Activated CD8-positive, alpha-beta T cell treated with anti-CD3 and anti-CD28 coated beads, Interleukin-2, amount 10 ng/mL, durations not matched to agents 7 days and 5 days (primary cell): ENCODE measurements at regions of chr1 and their contacts with region 1.

Region 1: DNA sequence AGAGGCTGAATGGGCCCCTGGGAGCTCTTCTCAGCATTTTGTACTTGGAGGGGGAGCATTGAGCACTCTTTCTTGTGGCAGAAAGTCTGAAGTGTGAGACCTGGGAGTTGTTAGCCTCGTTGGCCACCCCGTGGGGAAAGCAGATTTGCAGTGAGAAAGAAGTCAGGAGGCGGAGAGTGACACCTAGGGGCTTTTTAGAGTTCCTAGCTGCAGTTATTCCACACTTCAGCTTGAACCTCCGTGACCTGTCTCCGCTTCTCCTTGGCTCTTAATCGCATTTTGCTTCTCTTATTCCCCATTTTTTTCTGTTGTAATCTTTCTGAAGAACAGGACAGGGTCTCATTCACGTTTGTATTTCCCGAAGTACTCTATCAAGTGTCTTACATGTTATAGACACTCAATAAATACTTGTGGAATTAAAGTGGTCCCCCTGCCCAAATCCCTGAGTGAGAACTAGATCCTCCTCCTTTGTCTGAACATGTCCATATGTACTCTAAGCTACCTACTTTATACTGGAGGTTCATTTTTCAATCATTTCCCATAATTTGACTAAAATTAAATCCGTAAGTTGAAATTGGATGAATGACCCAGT is 14.5 kb upstream of the C1orf141 start:
- DNase-seq: peak; percentile 77
- ATAC-seq: peak; percentile 86
- H3K4me3 Mint-ChIP-seq: no peak overlapping the region
- H3K27ac Mint-ChIP-seq: peak overlapping the region; percentile 58
- H3K4me1 Mint-ChIP-seq: peaks cover 42% of the 10 kb centered on the region
- H3K27me3 Mint-ChIP-seq: peaks cover 33% of the 10 kb centered on the region

Region 2: DNA sequence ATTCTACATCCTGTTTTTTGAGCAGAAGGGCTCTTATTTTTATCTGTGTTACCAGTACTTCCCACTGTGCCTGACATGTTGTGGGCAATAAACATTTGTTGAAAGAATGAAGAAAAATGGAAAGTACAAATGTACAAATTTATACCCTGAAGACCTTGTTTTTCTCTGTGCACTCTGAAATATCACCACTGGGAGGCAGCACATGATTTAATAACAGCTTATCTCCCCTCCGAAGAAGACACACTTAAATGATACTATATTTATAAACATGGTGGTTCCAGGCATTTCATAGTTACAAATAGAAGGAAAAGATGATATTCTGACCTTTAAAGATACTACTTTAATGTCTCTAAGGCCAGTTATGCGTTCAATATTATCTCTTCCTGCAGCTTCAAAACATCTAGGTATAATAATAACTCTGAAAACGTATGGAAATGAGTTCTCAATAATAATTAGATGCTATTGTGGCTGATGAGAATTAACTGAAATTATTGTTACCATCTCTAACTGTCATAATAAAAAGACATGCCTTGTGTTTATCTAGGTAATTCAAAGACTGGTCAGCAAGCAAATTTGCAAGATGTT is 384.2 kb before region 1 on chr1:
- CTCF ChIA-PET with region 1: interaction called, 23 read pairs
- POLR2A ChIA-PET with region 1: no interaction called
- DNase-seq: peak; percentile 72
- ATAC-seq: peak; percentile 63
- H3K4me3 Mint-ChIP-seq: no peak overlapping the region
- H3K27ac Mint-ChIP-seq: no peak overlapping the region
- H3K4me1 Mint-ChIP-seq: peaks cover 18% of the 10 kb centered on the region
- H3K27me3 Mint-ChIP-seq: peaks cover 5% of the 10 kb centered on the region

Region 3: GRCh38 chr1:66984491-66984890 is 164.8 kb before region 1 on chr1:
- CTCF ChIA-PET with region 1: interaction called, 16 read pairs
- POLR2A ChIA-PET with region 1: no interaction called
- DNase-seq: no peak
- ATAC-seq: no peak
- H3K4me3 Mint-ChIP-seq: no peak overlapping the region
- H3K27ac Mint-ChIP-seq: peak overlapping the region; percentile 20
- H3K4me1 Mint-ChIP-seq: peaks cover 28% of the 10 kb centered on the region
- H3K27me3 Mint-ChIP-seq: no peaks in the 10 kb centered on the region

Region 4: GRCh38 chr1:67005068-67005467 is 144.2 kb before region 1 on chr1:
- CTCF ChIA-PET with region 1: interaction called, 21 read pairs
- POLR2A ChIA-PET with region 1: interaction called, 3 read pairs
- DNase-seq: no peak
- ATAC-seq: no peak
- H3K4me3 Mint-ChIP-seq: no peak overlapping the region
- H3K27ac Mint-ChIP-seq: no peak overlapping the region
- H3K4me1 Mint-ChIP-seq: peaks cover 5% of the 10 kb centered on the region
- H3K27me3 Mint-ChIP-seq: no peaks in the 10 kb centered on the region

Region 5: DNA sequence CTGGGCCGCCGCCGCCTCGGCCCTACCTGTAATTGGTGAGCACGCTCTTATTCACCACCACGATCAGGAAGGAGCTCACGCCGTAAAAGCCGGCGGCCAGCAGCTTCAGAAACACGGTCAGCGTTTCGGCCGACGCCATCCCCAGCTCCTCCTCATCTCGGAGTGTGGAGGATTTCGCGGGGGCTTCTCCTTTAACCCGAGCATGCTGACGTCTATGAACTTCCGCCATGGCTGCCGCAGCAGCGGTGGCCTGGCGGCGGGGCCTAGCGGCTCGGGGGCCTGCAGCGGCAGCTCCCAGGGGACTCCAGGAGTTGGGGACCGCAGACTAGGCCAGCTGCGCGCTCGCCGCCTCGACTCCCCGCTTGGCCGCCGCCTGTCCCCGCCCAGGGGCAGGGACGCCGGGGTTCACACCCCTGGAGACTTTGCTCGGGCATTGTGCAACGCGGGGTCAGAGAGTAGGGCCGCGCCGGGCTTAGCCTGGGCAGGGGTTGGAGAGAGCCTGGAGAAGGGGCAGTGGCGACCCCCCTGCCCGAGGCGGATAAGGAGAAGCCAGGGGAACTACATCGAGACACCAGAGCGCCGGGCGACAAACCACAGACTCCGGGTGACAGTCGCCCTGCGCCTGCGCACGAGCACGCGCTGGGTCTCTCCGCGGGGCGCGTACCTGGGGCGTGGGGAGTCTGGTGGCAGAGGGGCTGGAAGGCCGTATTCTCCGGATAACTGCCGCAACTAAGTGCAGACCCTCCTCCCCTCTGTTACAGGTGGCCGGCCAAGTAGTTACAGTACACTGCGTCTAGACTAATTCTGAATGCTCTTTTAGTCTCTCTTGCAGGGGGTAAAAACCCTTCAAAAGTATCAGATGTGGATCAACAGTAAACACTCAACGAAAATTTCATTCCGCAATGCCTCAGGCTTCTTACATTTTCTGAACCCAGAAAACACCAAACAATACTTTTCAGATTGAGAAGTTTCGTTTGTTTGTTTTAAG is 95.2 kb before region 1 on chr1 and contains the start of gene SLC35D1:
- CTCF ChIA-PET with region 1: interaction called, 18 read pairs
- POLR2A ChIA-PET with region 1: interaction called, 4 read pairs
- DNase-seq: peak; percentile 79
- ATAC-seq: peak; percentile 81
- H3K4me3 Mint-ChIP-seq: peak within 1 kb of the TSS; percentile 77
- H3K27ac Mint-ChIP-seq: peak within 1 kb of the TSS; percentile 91
- H3K4me1 Mint-ChIP-seq: peaks cover 20% of the 10 kb centered on the region
- H3K27me3 Mint-ChIP-seq: peaks cover 10% of the 10 kb centered on the region
- total RNA-seq, gene SLC35D1: 11.2 to 11.4 TPM

Region 6: GRCh38 chr1:67162957-67163356 is 13.7 kb after region 1 on chr1:
- CTCF ChIA-PET with region 1: interaction called, 49 read pairs
- POLR2A ChIA-PET with region 1: interaction called, 6 read pairs
- DNase-seq: peak; percentile 54
- ATAC-seq: peak; percentile 90
- H3K4me3 Mint-ChIP-seq: no peak overlapping the region
- H3K27ac Mint-ChIP-seq: peak overlapping the region; percentile 72
- H3K4me1 Mint-ChIP-seq: peaks cover 25% of the 10 kb centered on the region
- H3K27me3 Mint-ChIP-seq: peaks cover 7% of the 10 kb centered on the region

Region 7: DNA sequence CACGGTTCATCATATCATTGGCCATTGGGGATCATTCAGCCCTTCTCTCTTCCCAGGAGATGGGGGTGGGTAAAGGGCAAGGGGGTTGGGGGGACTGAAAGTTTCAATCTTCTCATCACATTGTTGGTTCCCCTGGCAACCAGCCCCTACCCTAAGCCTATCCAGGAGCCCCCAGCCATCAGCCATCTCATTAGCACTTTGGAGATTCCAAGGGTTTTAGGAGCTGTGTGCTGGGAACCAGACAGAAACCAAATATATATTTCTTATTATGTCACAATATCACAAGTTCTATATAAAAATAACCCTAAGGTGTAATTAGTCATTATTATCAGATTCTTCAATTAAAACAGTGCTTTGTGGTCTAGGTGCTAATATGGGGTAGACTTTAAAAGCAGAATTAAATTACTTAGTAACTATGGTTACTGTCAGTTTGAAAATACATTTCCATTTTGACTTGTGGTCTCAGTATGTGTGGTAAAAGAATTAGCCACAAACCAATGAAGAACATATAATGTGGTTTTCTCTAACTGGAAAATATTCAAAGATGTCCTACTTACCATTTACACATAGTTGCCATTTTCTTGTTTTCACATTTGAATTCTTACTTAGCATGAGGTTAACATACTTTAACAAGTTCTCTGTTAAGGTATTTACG is 45.1 kb after region 1 on chr1:
- CTCF ChIA-PET with region 1: interaction called, 15 read pairs
- POLR2A ChIA-PET with region 1: no interaction called
- DNase-seq: no peak
- ATAC-seq: peak; percentile 62
- H3K4me3 Mint-ChIP-seq: peak overlapping the region; percentile 2
- H3K27ac Mint-ChIP-seq: peak overlapping the region; percentile 44
- H3K4me1 Mint-ChIP-seq: peaks cover 14% of the 10 kb centered on the region
- H3K27me3 Mint-ChIP-seq: no peaks in the 10 kb centered on the region